Lower leg skin (tissue), 4 donors: ENCODE measurements at regions of chr5 and their contacts with region 1.

Region 1: GRCh38 chr5:55146543-55147151 is 13.3 kb upstream of the GPX8 start:
- DNase-seq: peak; percentile 75 to 95
- H3K4me3 ChIP-seq: no peak overlapping the region
- CTCF ChIP-seq: peak in 1 of 3 donors; percentile 77
- POLR2A ChIP-seq: no peak

Region 2: DNA sequence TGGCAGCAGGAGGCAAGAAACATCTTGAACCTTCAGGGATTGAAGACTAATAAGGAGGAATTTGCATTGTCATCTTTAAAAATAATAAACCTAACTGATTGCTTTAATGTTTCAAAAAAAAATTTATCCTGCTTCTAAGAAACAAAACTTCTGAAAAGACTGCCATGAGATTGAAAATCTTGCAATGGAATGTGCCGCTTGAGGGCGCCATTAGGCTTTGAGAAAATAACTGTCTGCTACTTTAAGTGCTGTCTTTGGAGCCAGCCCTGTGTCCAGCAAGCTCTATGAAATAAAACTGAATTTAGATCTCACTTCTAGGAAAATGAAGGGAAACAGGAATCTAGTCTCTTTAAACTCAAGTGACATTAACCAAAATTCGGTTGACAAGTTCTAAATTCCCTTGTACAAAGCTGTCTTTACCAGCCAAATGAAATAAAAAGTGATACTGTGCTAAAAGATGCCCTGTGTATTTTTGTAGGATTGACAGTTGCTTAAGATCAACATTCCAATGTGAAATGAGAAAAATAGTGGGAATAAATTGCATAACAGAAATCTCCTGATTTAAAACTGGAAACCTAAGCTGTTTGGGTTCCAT is 240.6 kb before region 1 on chr5:
- intact Hi-C with region 1: loop called (anchors 10 kb)
- DNase-seq: peak; percentile 45 to 89
- H3K4me3 ChIP-seq: no peak overlapping the region
- CTCF ChIP-seq: no peak
- POLR2A ChIP-seq: no peak

Region 3: GRCh38 chr5:55052383-55052931 is 94.2 kb before region 1 on chr5:
- intact Hi-C with region 1: no loop called
- DNase-seq: no peak
- H3K4me3 ChIP-seq: no peak overlapping the region
- CTCF ChIP-seq: no peak
- POLR2A ChIP-seq: no peak

Region 4: GRCh38 chr5:55250064-55250463 is 103.4 kb after region 1 on chr5:
- intact Hi-C with region 1: no loop called
- DNase-seq: no peak
- H3K4me3 ChIP-seq: no peak overlapping the region
- CTCF ChIP-seq: no peak
- POLR2A ChIP-seq: no peak